Panc1 (cell line): ENCODE measurements at regions of chr11 and their contacts with region 1.

Region 1: GRCh38 chr11:73625696-73626318 is 20.6 kb upstream of the PLEKHB1 start:
- DNase-seq: peak; percentile 61
- ATAC-seq: peak; percentile 95
- H3K4me3 ChIP-seq: peak overlapping the region in 1 of 2 experiments; percentile 9; a peak in 1 of 4 replicates
- H3K27ac ChIP-seq: no peak overlapping the region
- H3K4me1 ChIP-seq: no peaks in the 10 kb centered on the region
- H3K27me3 ChIP-seq: peaks cover 10% of the 10 kb centered on the region
- CTCF ChIP-seq: peak; percentile 99

Region 2: GRCh38 chr11:73612601-73613140 is 13.1 kb before region 1 on chr11:
- CTCF ChIA-PET with region 1: interaction called, 3 read pairs
- POLR2A ChIA-PET with region 1: interaction called, 18 read pairs
- in situ Hi-C with region 1: no loop called
- intact Hi-C with region 1: loop called (anchors 2 kb)
- DNase-seq: no peak
- ATAC-seq: no peak
- H3K4me3 ChIP-seq: no peak overlapping the region
- H3K27ac ChIP-seq: no peak overlapping the region
- H3K4me1 ChIP-seq: no peaks in the 10 kb centered on the region
- H3K27me3 ChIP-seq: no peaks in the 10 kb centered on the region
- CTCF ChIP-seq: no peak

Region 3: GRCh38 chr11:73647459-73648100 is 21.8 kb after region 1 on chr11:
- CTCF ChIA-PET with region 1: interaction called, 7 read pairs
- POLR2A ChIA-PET with region 1: interaction called, 12 read pairs
- in situ Hi-C with region 1: no loop called
- intact Hi-C with region 1: no loop called
- DNase-seq: peak; percentile 22
- ATAC-seq: peak; percentile 97
- H3K4me3 ChIP-seq: peak overlapping the region; percentile 29 to 52
- H3K27ac ChIP-seq: peak overlapping the region; percentile 13; the same call in 1 of the 2 replicates
- H3K4me1 ChIP-seq: no peaks in the 10 kb centered on the region; the same call in 1 of the 2 replicates
- H3K27me3 ChIP-seq: no peaks in the 10 kb centered on the region
- CTCF ChIP-seq: no peak

Region 4: GRCh38 chr11:73661035-73661628 is 35.3 kb after region 1 on chr11:
- CTCF ChIA-PET with region 1: interaction called, 38 read pairs
- POLR2A ChIA-PET with region 1: interaction called, 13 read pairs
- in situ Hi-C with region 1: no loop called
- intact Hi-C with region 1: loop called (anchors 2 kb)
- DNase-seq: peak; percentile 65
- ATAC-seq: peak; percentile 97
- H3K4me3 ChIP-seq: peak overlapping the region; percentile 7 to 36; a peak in 2 of 4 replicates
- H3K27ac ChIP-seq: peak overlapping the region; percentile 49; the same call in 1 of the 2 replicates
- H3K4me1 ChIP-seq: no peaks in the 10 kb centered on the region
- H3K27me3 ChIP-seq: no peaks in the 10 kb centered on the region
- CTCF ChIP-seq: peak; percentile 98

Region 5: GRCh38 chr11:73931039-73931645 is 305.3 kb after region 1 on chr11:
- CTCF ChIA-PET with region 1: interaction called, 12 read pairs
- POLR2A ChIA-PET with region 1: no interaction called
- in situ Hi-C with region 1: no loop called
- intact Hi-C with region 1: no loop called
- DNase-seq: peak; percentile 46
- ATAC-seq: peak; percentile 99
- H3K4me3 ChIP-seq: no peak overlapping the region
- H3K27ac ChIP-seq: no peak overlapping the region
- H3K4me1 ChIP-seq: no peaks in the 10 kb centered on the region
- H3K27me3 ChIP-seq: no peaks in the 10 kb centered on the region
- CTCF ChIP-seq: peak; percentile 83